ENCODE measurements at regions of chr3 and their contacts with region 1.

Region 1: DNA sequence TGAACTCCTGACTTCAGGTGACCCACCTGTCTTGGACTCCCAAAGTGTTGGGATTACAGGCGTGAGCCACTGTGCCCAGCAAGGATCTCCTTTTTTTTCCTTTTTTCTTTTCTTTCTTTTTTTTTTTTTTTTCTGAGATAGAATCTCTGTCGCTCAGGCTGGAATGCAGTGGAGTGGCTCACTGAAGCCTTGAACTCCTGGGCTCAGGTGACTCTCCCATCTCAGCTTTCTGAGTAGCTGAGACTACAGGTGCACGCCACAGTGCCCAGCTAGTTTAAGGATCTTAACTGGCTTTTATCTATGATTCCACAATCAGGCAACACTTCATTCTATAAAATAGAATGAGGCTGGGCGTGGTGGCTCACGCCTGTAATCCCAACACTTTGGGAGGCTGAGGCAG is 16.3 kb upstream of the NICN1 start:
- DNase-seq: no peak
- ATAC-seq: no peak
- H3K4me3 ChIP-seq: no peak overlapping the region
- H3K27ac ChIP-seq: no peak overlapping the region
- H3K4me1 ChIP-seq: peaks cover 1% of the 10 kb centered on the region
- H3K27me3 ChIP-seq: no peaks in the 10 kb centered on the region

Region 2: GRCh38 chr3:48989796-48990635 is 455.4 kb before region 1 on chr3 and contains the start of gene P4HTM:
- intact Hi-C with region 1: loop called in 1 of 4 experiments (anchors 10 kb)
- DNase-seq: peak; percentile 91 to 96 (median 95)
- ATAC-seq: peak; percentile 92 to 94
- H3K4me3 ChIP-seq: peak within 1 kb of the TSS; percentile 63
- H3K27ac ChIP-seq: peak within 1 kb of the TSS; percentile 90
- H3K4me1 ChIP-seq: peaks cover 8% of the 10 kb centered on the region
- H3K27me3 ChIP-seq: no peaks in the 10 kb centered on the region
- total RNA-seq, gene P4HTM: 39.1 to 42.8 (median 39.5) TPM

Region 3: GRCh38 chr3:49171119-49171774 is 274.1 kb before region 1 on chr3 and contains the start of gene KLHDC8B:
- intact Hi-C with region 1: loop called in 2 of 4 experiments (anchors 5 to 10 kb)
- DNase-seq: peak; percentile 91 to 96 (median 95)
- ATAC-seq: peak; percentile 91 to 94
- H3K4me3 ChIP-seq: peak within 1 kb of the TSS; percentile 40
- H3K27ac ChIP-seq: peak within 1 kb of the TSS; percentile 71
- H3K4me1 ChIP-seq: peaks cover 17% of the 10 kb centered on the region
- H3K27me3 ChIP-seq: no peaks in the 10 kb centered on the region
- total RNA-seq, gene KLHDC8B: 54.7 to 74.6 (median 60.3) TPM

Region 4: DNA sequence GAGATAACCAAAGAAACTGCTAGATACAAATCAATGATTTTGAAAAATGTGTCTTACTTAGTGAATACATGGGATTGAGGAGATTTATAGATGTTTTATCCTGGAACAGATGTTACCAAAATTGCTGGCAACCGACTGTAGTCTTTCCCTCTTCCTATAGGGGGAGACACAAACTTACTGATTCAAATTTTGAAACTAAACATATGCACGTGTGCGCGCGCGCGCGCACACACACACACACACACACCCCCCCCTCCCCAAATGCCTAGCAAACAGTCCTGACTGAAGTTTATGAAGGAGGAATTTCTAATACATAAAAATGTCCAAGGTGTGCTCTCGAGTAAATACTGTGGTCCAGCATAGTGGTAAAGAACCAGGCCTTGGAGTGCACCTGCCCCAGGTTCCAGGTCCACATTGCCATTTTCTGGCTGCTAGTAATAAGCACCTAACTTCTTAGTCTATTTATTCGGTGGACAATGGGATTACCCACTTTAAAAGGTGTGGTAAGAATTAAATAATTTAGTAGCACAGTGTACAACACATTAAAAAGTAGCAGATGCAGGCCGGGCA is 149.8 kb before region 1 on chr3:
- intact Hi-C with region 1: loop called in 1 of 4 experiments (anchors 10 kb)
- DNase-seq: peak in 1 of 3 donors; percentile 49
- ATAC-seq: peak in 1 of 2 donors; percentile 10
- H3K4me3 ChIP-seq: no peak overlapping the region
- H3K27ac ChIP-seq: no peak overlapping the region
- H3K4me1 ChIP-seq: peaks cover 6% of the 10 kb centered on the region
- H3K27me3 ChIP-seq: no peaks in the 10 kb centered on the region

Region 5: DNA sequence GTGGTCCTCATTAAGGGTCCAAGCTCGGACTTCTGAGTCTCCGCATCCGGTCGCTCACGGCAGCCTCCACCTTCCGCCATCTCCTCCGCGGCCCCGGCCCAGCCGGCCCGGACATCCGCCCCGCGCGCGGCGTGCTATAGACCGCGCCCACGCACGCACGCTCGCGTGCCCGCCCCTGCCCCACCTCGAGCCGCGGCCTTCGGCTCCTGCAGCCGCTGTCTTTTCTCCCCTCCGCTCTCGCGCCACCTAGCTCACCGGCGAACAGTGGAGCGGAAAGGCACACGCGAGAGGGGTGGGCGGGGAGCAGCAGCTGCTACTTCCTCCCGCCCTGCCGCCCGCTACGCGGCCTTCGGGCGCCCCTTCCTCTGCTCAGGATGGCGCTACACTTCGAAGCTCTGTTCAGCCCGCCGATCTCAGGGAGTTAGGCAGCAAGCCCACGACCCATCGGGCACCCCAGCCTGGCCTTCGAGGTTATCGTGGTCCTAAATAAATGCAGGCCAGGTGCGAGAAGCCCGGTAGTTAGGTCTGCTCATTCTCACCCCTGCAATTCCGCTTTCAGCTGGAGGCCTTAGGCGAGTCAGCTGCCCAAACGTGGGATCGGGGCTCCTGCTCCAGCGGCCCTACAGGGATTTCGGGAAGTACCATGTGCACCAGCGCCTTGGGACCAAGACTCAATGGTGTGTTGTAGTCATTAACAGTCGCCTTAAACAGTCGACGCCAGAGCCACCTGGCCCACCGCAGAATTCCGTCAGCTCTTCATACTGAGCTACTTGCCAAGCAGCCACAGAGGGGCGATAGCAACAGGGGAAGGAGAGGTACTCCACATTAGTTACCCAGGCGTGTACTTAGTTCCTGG is 105.2 kb before region 1 on chr3 and contains the start of gene USP4:
- intact Hi-C with region 1: loop called in 2 of 4 experiments (anchors 5 to 10 kb)
- DNase-seq: peak; percentile 91 to 98 (median 96)
- ATAC-seq: peak; percentile 97 to 98
- H3K4me3 ChIP-seq: peak within 1 kb of the TSS; percentile 77
- H3K27ac ChIP-seq: peak within 1 kb of the TSS; percentile 91
- H3K4me1 ChIP-seq: no peaks in the 10 kb centered on the region
- H3K27me3 ChIP-seq: no peaks in the 10 kb centered on the region
- total RNA-seq, gene USP4: 36.6 to 46.0 (median 40.4) TPM

Region 6: DNA sequence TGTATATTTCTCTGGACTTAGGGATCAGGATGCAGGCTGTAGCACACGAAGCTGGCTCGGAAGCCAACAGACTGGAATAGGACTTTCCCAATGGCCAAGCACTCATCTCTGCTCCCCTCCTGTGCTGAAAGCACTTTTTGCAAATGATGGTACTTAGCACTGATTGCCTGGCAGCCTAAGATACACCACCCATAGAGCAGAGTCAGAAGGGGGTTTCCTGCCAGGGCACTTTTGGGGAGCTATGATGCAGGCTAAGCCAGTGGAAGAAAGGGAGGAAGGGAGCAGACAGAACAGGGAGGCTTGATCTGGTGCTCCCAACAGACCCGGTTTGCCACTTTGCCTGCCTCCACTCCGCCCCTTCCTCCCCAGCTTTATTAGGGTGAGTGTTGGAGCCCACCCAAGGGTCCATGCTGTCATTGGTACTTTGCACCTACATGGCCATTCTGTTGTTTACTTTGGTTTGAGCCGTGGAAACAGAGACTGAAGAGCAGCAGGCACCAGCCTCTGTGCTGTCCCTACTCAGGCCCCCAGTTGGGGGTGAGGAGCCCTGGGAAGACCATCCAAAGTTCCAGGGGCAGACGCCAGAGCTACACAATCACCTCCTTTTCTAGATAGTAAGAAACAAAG is 124.8 kb after region 1 on chr3:
- intact Hi-C with region 1: no loop called
- DNase-seq: no peak
- ATAC-seq: no peak
- H3K4me3 ChIP-seq: no peak overlapping the region
- H3K27ac ChIP-seq: no peak overlapping the region
- H3K4me1 ChIP-seq: no peaks in the 10 kb centered on the region
- H3K27me3 ChIP-seq: no peaks in the 10 kb centered on the region